Right ventricle myocardium inferior (tissue), 1 donor: ENCODE measurements at regions of chr4 and their contacts with region 1.

Region 1: DNA sequence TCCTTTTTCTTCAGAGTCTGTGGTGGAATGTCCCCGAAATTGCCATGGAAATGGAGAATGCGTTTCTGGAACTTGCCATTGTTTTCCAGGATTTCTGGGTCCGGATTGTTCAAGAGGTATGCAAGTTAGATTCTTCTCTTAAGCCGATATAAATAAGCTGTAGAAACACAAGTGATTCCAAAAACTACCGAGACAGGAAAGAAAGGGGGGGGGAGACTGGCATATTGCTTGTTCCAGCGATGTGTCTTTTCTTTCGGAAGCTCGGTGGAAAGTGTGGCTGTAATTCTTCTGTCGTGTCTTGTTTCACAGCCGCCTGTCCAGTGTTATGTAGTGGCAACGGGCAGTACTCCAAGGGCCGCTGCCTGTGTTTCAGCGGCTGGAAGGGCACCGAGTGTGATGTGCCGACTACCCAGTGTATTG is 236.9 kb downstream of the DCTD start:
- DNase-seq: peak; percentile 69
- ATAC-seq: peak; percentile 86

Region 2: DNA sequence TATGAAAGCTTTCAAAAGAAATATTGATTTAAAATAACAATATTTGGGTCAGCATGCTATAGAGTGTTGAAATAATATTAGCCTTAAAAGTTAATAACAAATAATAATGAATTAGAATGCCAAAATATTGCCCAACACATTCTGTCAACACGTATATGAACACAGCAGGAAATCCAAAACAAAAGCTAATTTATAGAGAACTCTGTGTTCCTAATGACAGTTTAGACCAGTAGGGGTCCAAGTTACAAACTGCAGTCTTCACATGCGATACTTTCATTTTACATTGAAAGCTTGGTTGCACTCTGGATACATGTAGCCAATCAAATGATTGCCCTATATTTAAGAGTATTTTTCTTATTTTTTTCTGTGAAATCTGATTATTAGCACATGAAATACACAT is 37.4 kb before region 1 on chr4:
- intact Hi-C with region 1: loop called (anchors 5 kb)
- DNase-seq: no peak
- ATAC-seq: no peak

Region 3: DNA sequence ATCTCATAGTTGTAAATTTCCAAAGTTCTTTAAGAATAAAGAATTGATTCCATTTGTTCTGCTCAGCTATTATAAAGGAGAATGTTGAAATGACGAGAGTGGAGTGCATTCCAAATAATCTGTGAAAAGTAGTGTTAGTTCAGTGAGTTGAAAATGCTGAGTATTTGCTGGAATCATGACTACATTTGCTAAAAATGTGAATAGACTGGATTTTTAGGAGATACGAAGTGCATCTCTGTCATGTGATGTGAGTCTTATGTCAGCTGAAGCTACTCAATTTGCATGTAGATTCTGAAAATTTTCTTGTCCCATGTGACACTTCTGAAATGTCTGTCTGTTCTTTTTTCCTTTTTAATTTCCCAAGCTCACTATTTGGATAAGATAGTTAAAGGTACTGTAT is 31.0 kb after region 1 on chr4:
- intact Hi-C with region 1: no loop called
- DNase-seq: no peak
- ATAC-seq: no peak

Region 4: GRCh38 chr4:182741914-182742313 is 61.7 kb after region 1 on chr4:
- intact Hi-C with region 1: loop called (anchors 5 kb)
- DNase-seq: no peak
- ATAC-seq: no peak